Activated CD4-positive, alpha-beta memory T cell treated with anti-CD3 and anti-CD28 coated beads for 36 hours (primary cell): ENCODE measurements at regions of chr14 and their contacts with region 1.

Region 1: DNA sequence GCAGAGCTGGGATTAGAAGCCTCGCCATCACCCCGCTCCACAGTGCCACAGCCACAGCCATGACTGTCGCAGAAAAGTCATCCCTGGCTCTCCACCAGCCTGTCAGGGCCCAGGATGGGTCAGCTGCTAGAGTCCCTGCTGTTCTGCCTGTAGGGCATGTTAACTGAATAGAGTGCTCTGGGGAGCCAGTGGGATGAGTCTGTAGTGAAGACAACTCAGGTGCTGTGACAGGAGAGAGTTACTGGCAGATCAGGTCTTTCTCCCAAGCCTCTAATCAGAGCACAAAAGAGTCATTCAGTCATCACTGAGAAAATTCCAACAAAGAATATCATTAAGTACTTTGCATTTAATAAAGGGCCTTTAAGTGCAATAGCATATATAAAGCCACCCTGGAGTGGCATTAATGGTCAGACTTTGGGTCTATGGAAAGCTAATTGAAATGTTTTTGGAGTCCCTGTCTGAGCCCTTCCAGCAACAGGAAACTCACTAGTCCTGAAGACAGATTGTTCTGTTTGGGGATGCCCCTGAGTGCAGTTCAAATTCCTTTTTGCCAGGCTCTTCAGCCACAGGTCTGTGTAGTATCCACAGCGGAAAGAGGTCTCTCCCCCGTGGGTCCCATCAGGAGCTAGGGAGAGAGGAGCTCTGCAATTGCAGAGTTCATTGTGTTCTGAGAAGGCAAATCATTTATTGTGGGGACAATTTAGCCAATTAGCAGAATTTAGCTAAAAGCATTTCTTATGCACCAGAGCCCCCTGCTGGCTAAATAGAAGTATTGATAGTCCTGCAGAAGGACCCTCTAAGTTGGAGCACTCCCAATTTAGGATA is 45.2 kb upstream of the C14orf132 start:
- DNase-seq: peak; percentile 13
- H3K4me3 Mint-ChIP-seq: no peak overlapping the region
- H3K27ac Mint-ChIP-seq: no peak overlapping the region
- H3K4me1 Mint-ChIP-seq: no peaks in the 10 kb centered on the region
- H3K27me3 Mint-ChIP-seq: peaks cover 36% of the 10 kb centered on the region

Region 2: GRCh38 chr14:95561001-95561412 is 433.0 kb before region 1 on chr14:
- CTCF ChIA-PET with region 1: interaction called, 6 read pairs
- POLR2A ChIA-PET with region 1: no interaction called
- intact Hi-C with region 1: loop called (anchors 1 kb)
- DNase-seq: peak; percentile 92
- H3K4me3 Mint-ChIP-seq: no peak overlapping the region
- H3K27ac Mint-ChIP-seq: no peak overlapping the region
- H3K4me1 Mint-ChIP-seq: peaks cover 4% of the 10 kb centered on the region
- H3K27me3 Mint-ChIP-seq: peaks cover 5% of the 10 kb centered on the region

Region 3: DNA sequence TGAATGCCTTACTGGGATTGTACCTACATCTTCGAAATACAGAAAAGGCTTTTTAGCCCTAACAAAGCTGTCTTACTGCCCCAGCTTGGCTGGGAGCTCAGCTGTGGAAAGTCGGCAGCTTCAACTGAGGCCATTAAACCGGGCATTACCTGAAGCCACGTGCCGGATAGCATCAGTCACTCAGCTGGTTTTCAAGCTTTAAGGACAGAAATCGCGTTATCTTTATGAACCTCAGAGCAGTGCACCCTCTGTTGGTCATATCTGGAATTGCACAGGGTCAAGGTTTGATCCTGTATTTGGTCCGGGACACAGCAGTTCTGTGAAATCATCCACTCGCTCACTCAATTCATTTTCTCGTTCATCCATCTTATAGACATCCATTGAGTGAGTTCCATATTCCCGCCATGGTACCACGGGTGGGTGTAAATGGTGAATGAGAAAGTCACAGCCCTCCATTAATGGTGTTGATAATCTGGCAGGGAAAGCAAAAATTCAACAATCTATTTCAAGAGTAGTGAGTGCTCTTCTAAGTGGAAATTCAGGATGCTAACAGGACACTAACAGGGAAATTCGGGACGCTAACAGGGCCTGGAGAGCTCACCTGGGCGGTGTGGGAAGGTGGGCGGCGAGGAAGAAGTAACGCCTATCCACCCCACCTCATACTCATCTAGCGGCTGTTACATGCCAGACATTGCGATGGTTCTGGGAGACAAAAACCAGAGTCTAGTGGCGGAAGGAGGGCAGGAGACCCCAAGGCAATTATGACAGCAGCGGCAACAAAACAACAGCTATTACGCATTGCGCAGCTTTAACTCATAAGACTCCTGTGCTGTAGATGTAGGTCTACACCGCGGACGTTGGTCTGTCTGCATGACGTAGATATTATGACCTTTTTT is 219.5 kb before region 1 on chr14:
- CTCF ChIA-PET with region 1: interaction called, 13 read pairs
- POLR2A ChIA-PET with region 1: no interaction called
- intact Hi-C with region 1: no loop called
- DNase-seq: peak; percentile 55
- H3K4me3 Mint-ChIP-seq: no peak overlapping the region
- H3K27ac Mint-ChIP-seq: no peak overlapping the region
- H3K4me1 Mint-ChIP-seq: no peaks in the 10 kb centered on the region
- H3K27me3 Mint-ChIP-seq: peaks cover 10% of the 10 kb centered on the region

Region 4: DNA sequence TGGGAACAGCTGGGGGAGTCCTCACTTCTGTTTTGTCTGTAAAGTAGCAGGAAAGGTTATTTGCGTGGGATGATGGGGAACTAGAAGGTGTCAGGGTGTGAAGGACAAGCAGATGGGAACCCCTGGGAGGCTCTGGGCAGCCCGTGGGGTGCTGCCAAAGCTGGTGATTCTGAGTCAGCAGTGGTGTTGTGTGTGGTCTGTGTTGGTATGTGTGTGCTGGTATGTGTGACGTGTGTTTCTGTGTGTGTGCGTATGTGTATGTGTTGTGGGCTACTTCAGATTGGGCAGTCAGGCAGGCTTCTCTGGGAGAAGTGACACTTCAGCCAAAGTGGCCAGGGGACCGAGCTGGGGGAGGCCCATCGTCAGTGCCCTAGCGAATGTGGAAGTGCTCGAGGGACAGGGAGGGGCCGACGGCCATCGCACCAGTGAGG is 195.3 kb after region 1 on chr14:
- CTCF ChIA-PET with region 1: no interaction called
- POLR2A ChIA-PET with region 1: no interaction called
- intact Hi-C with region 1: no loop called
- DNase-seq: no peak
- H3K4me3 Mint-ChIP-seq: no peak overlapping the region
- H3K27ac Mint-ChIP-seq: no peak overlapping the region
- H3K4me1 Mint-ChIP-seq: no peaks in the 10 kb centered on the region
- H3K27me3 Mint-ChIP-seq: peaks cover 13% of the 10 kb centered on the region

Region 5: GRCh38 chr14:96275177-96276112 is 281.5 kb after region 1 on chr14:
- CTCF ChIA-PET with region 1: interaction called, 4 read pairs
- POLR2A ChIA-PET with region 1: no interaction called
- intact Hi-C with region 1: loop called (anchors 5 kb)
- DNase-seq: peak; percentile 78
- H3K4me3 Mint-ChIP-seq: no peak overlapping the region
- H3K27ac Mint-ChIP-seq: no peak overlapping the region
- H3K4me1 Mint-ChIP-seq: no peaks in the 10 kb centered on the region
- H3K27me3 Mint-ChIP-seq: no peaks in the 10 kb centered on the region